HepG2 (cell line): ENCODE measurements at regions of chr16 and their contacts with region 1.

Region 1: GRCh38 chr16:55760310-55761001 is 72.4 kb downstream of the CES1 start:
- DNase-seq: peak; percentile 70
- ATAC-seq: peak; percentile 87
- H3K4me3 ChIP-seq: peak overlapping the region; percentile 40 to 75 (median 60); a peak in 5 of 6 replicates
- H3K27ac ChIP-seq: peak overlapping the region; percentile 60
- H3K4me1 ChIP-seq: peaks cover 46% of the 10 kb centered on the region
- H3K27me3 ChIP-seq: no peaks in the 10 kb centered on the region; a peak in 1 of 5 replicates
- CTCF ChIP-seq: no peak
- EP300 ChIP-seq: peak in 1 of 2 experiments; percentile 29; a peak in 1 of 4 replicates
- POLR2A ChIP-seq: peak in 1 of 2 experiments; percentile 67; a peak in 2 of 4 replicates
- RAD21 ChIP-seq: no peak

Region 2: DNA sequence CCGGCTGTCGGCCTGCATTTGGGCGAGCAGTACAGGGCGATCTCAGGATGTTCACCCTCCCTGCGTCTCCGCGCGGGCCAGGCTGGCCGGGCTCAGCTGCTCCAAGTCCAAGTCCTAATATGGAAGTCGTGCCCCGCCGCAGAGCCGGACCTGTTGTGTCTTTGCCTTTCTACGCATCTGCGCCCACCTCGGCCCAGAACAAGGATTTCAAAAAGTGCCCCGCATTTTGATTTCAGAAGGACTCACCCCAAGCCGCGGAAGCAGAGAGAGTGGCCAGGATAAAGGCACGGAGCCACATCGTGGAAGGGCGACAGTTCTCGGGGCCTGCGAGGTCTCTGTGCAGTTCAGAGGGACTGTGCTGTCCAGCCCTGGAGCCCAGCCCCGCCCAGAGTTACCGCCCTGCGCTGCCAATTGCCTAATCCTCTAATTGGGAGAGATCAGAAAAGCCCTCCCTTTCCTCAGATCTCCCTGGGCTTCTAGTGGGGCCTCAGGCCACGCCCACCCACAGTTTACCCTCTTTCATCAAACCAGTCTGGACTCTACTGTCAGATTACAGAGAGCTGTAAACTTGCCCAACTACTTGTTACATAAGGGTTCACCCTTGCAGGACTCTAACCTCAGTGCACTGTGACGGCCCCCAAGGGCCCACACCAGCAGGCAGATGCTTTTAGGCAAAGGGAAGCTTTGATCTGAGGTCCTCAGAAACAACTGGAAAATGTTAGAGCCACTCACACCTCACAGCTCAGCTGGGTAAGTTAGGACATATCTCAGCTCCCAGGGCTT is 72.5 kb after region 1 on chr16 and contains the start of gene CES1:
- CTCF ChIA-PET with region 1: no interaction called
- POLR2A ChIA-PET with region 1: interaction called, 6 read pairs
- in situ Hi-C with region 1: loop called (anchors 5 kb)
- intact Hi-C with region 1: loop called (anchors 2 kb)
- DNase-seq: peak; percentile 94
- ATAC-seq: peak; percentile 92
- H3K4me3 ChIP-seq: peak within 1 kb of the TSS; percentile 69 to 77 (median 74)
- H3K27ac ChIP-seq: peak within 1 kb of the TSS; percentile 80
- H3K4me1 ChIP-seq: peaks cover 54% of the 10 kb centered on the region
- H3K27me3 ChIP-seq: no peaks in the 10 kb centered on the region
- CTCF ChIP-seq: no peak
- EP300 ChIP-seq: peak in 1 of 2 experiments; percentile 82; a peak in 2 of 4 replicates
- POLR2A ChIP-seq: peak; percentile 76 to 88
- RAD21 ChIP-seq: 0 out of 2 replicates have a peak, but pooled peaks have one; percentile 19
- total RNA-seq, gene CES1: 82.8 and 198 TPM in 2 replicates